Spleen (tissue), 13 donors: ENCODE measurements at regions of chr19 and their contacts with region 1.

Region 1: DNA sequence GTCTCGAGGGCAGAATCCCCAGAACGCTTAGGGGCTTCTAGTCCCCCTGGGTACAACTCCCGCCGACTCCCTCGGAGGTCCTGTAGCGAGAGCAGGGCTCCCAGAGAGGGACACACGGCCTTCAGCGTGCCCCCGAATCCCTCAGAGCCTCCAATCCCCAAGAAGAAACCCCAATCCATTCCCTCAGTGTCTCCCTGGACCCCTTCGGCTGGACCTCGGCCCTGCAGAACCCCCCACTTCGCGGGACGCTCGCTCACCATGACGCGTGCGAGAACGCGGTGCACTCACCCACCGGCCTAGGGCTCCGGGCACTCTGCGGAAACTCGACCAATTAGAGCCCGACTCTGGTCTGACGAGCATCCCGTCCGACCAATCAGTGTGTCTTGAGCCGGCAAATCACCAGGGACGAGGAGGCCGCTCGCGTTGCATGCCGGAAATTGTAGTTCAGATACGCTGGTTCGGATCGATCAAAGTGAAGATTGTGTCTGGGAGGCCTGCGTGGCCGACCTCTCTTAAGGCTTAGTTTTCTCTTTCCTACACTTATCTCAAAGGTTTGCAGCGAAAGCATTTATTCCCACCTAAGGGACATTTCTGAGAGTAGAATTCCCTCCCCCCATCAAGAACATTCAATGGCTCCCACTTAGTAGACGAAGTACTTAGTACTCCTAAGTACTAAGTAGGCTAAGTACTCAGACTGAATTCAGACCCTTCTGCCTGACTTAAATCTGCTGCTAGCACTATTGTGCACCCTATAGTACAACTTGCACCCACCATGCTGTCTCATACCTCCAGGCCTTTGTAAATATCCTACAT is at the start of gene TMEM161A:
- DNase-seq: peak; percentile 96
- H3K4me3 ChIP-seq: peak within 1 kb of the TSS; percentile 50 to 77 (median 64)
- H3K27ac ChIP-seq: peak within 1 kb of the TSS; percentile 48 to 85 (median 68)
- H3K4me1 ChIP-seq: peaks cover 0 to 40% (median 22%) of the 10 kb centered on the region in 6 donors
- H3K27me3 ChIP-seq: no peaks in the 10 kb centered on the region
- CTCF ChIP-seq: peak in 3 of 11 experiments; percentile 13 to 28 (median 22)
- POLR2A ChIP-seq: peak in 2 of 3 donors; percentile 11 to 54
- total RNA-seq, gene TMEM161A: 15.1 to 21.9 (median 18.4) TPM

Region 2: GRCh38 chr19:19063183-19064097 is 74.9 kb before region 1 on chr19 and contains the start of gene SLC25A42:
- intact Hi-C with region 1: loop called (anchors 5 kb)
- DNase-seq: peak; percentile 99
- H3K4me3 ChIP-seq: peak within 1 kb of the TSS; percentile 57 to 95 (median 80)
- H3K27ac ChIP-seq: peak within 1 kb of the TSS; percentile 59 to 93 (median 86)
- H3K4me1 ChIP-seq: peaks cover 21 to 54% (median 44%) of the 10 kb centered on the region in 6 donors
- H3K27me3 ChIP-seq: no peaks in the 10 kb centered on the region
- CTCF ChIP-seq: peak in 2 of 11 experiments; percentile 12 to 25
- POLR2A ChIP-seq: peak in 1 of 3 donors; percentile 5
- total RNA-seq, gene SLC25A42: 12.5 to 25.3 (median 16.8) TPM